ENCODE measurements at regions of chr19 and their contacts with region 1.

Region 1: GRCh38 chr19:10533646-10534386 is 9.9 kb upstream of the ATG4D start:
- DNase-seq: no peak
- H3K4me3 ChIP-seq: no peak overlapping the region
- H3K27ac ChIP-seq: no peak overlapping the region
- H3K4me1 ChIP-seq: no peaks in the 10 kb centered on the region
- H3K27me3 ChIP-seq: no peaks in the 10 kb centered on the region
- CTCF ChIP-seq: no peak
- EP300 ChIP-seq: no peak
- POLR2A ChIP-seq: no peak
- RAD21 ChIP-seq: no peak

Region 2: GRCh38 chr19:10433131-10433536 is 100.7 kb before region 1 on chr19:
- CTCF ChIA-PET with region 1: no interaction called
- POLR2A ChIA-PET with region 1: no interaction called
- DNase-seq: no peak
- H3K4me3 ChIP-seq: no peak overlapping the region
- H3K27ac ChIP-seq: no peak overlapping the region
- H3K4me1 ChIP-seq: peaks cover 0 to 9% (median 6%) of the 10 kb centered on the region in 4 experiments; a peak in 6 of 7 replicates
- H3K27me3 ChIP-seq: peaks cover 32 to 54% (median 46%) of the 10 kb centered on the region in 4 experiments
- CTCF ChIP-seq: no peak
- EP300 ChIP-seq: no peak
- POLR2A ChIP-seq: no peak
- RAD21 ChIP-seq: no peak

Region 3: GRCh38 chr19:10510301-10510802 is 23.5 kb before region 1 on chr19:
- CTCF ChIA-PET with region 1: interaction called, 55 read pairs
- POLR2A ChIA-PET with region 1: interaction called, 3 read pairs
- DNase-seq: peak in 1 of 2 experiments; percentile 98
- H3K4me3 ChIP-seq: no peak overlapping the region; a peak in 1 of 8 replicates
- H3K27ac ChIP-seq: no peak overlapping the region
- H3K4me1 ChIP-seq: peaks cover 0 to 15% (median 8%) of the 10 kb centered on the region in 4 experiments; a peak in 6 of 7 replicates
- H3K27me3 ChIP-seq: peaks cover 24 to 30% (median 29%) of the 10 kb centered on the region in 4 experiments; a peak in 6 of 7 replicates
- CTCF ChIP-seq: peak; percentile 64 to 81 (median 77)
- EP300 ChIP-seq: no peak
- POLR2A ChIP-seq: no peak
- RAD21 ChIP-seq: peak; percentile 27 to 55; a peak in 3 of 4 replicates

Region 4: GRCh38 chr19:10517760-10518443 is 15.9 kb before region 1 on chr19:
- CTCF ChIA-PET with region 1: interaction called, 55 read pairs
- POLR2A ChIA-PET with region 1: interaction called, 4 read pairs
- DNase-seq: peak in 1 of 2 experiments; percentile 87
- H3K4me3 ChIP-seq: peak overlapping the region; percentile 67 to 79 (median 78)
- H3K27ac ChIP-seq: no peak overlapping the region
- H3K4me1 ChIP-seq: peaks cover 0 to 29% (median 10%) of the 10 kb centered on the region in 4 experiments; a peak in 5 of 7 replicates
- H3K27me3 ChIP-seq: peaks cover 43 to 66% (median 62%) of the 10 kb centered on the region in 4 experiments; a peak in 6 of 7 replicates
- CTCF ChIP-seq: no peak
- EP300 ChIP-seq: no peak
- POLR2A ChIP-seq: no peak
- RAD21 ChIP-seq: no peak

Region 5: DNA sequence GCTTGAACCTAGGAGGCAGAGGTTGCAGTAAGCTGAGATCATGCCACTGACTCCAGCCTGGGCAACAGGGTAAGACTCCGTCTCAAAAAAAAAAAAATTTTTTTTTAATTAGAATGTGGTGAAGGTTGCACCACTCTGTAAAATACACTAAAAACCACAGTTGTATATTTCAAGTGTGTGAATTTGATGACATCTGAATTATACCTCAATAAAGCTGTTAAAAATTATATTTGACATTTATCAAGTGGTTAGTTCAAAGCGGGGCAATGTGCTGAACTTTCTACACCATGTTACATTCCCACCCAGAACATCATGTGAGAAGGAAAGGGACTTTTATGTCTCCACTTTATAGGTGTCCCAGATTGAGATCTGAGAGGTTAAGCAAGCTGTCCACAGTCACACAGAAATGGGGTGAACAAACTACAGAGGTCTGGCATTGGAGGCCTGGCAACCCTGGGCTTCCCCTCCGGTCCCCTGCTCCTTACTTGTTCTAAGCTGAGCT is 10.6 kb before region 1 on chr19:
- CTCF ChIA-PET with region 1: interaction called, 10 read pairs
- POLR2A ChIA-PET with region 1: interaction called, 4 read pairs
- DNase-seq: no peak
- H3K4me3 ChIP-seq: no peak overlapping the region
- H3K27ac ChIP-seq: no peak overlapping the region
- H3K4me1 ChIP-seq: peaks cover 0 to 8% (median 4%) of the 10 kb centered on the region in 4 experiments; a peak in 3 of 7 replicates
- H3K27me3 ChIP-seq: peaks cover 7 to 14% (median 13%) of the 10 kb centered on the region in 4 experiments; a peak in 6 of 7 replicates
- CTCF ChIP-seq: no peak
- EP300 ChIP-seq: no peak
- POLR2A ChIP-seq: no peak
- RAD21 ChIP-seq: no peak

Measured in H1 (cell line).